ENCODE measurements at regions of chr16 and their contacts with region 1.

Region 1: GRCh38 chr16:58392215-58393137 is at the start of gene GINS3:
- DNase-seq: peak; percentile 71 to 87 (median 75)
- H3K4me3 ChIP-seq: peak within 1 kb of the TSS; percentile 85
- H3K4me3 Mint-ChIP-seq: peak within 1 kb of the TSS; percentile 95 to 100 (median 100)
- H3K27ac ChIP-seq: peak within 1 kb of the TSS; percentile 72
- H3K27ac Mint-ChIP-seq: peak within 1 kb of the TSS; percentile 75 to 97 (median 95)
- H3K4me1 ChIP-seq: peaks cover 7% of the 10 kb centered on the region
- H3K4me1 Mint-ChIP-seq: peaks cover 13 to 23% (median 18%) of the 10 kb centered on the region in 3 donors
- H3K27me3 ChIP-seq: no peaks in the 10 kb centered on the region
- H3K27me3 Mint-ChIP-seq: peaks cover 0 to 5% of the 10 kb centered on the region in 2 donors
- total RNA-seq, gene GINS3: 25.3 to 26.5 TPM

Region 2: GRCh38 chr16:58402796-58403195 is 10.3 kb after region 1 on chr16:
- CTCF ChIA-PET with region 1: no interaction called
- POLR2A ChIA-PET with region 1: no interaction called
- DNase-seq: no peak
- H3K4me3 ChIP-seq: no peak overlapping the region
- H3K4me3 Mint-ChIP-seq: no peak overlapping the region
- H3K27ac ChIP-seq: no peak overlapping the region
- H3K27ac Mint-ChIP-seq: no peak overlapping the region
- H3K4me1 ChIP-seq: no peaks in the 10 kb centered on the region
- H3K4me1 Mint-ChIP-seq: no peaks in the 10 kb centered on the region
- H3K27me3 ChIP-seq: no peaks in the 10 kb centered on the region
- H3K27me3 Mint-ChIP-seq: no peaks in the 10 kb centered on the region

Region 3: GRCh38 chr16:58515125-58515870 is 122.8 kb after region 1 on chr16 and contains the start of gene SETD6:
- CTCF ChIA-PET with region 1: interaction called, 10 read pairs
- POLR2A ChIA-PET with region 1: no interaction called
- DNase-seq: peak; percentile 56 to 78 (median 67)
- H3K4me3 ChIP-seq: peak within 1 kb of the TSS; percentile 92
- H3K4me3 Mint-ChIP-seq: peak within 1 kb of the TSS; percentile 88 to 96 (median 90)
- H3K27ac ChIP-seq: peak within 1 kb of the TSS; percentile 75
- H3K27ac Mint-ChIP-seq: peak within 1 kb of the TSS; percentile 85 to 94 (median 88)
- H3K4me1 ChIP-seq: peaks cover 17% of the 10 kb centered on the region
- H3K4me1 Mint-ChIP-seq: peaks cover 17 to 22% (median 19%) of the 10 kb centered on the region in 3 donors
- H3K27me3 ChIP-seq: no peaks in the 10 kb centered on the region
- H3K27me3 Mint-ChIP-seq: no peaks in the 10 kb centered on the region
- total RNA-seq, gene SETD6: 23.8 to 24.9 TPM